ENCODE measurements at regions of chr1 and their contacts with region 1.

Region 1: GRCh38 chr1:39132505-39133339 is 71.8 kb upstream of the MACF1 start:
- DNase-seq: peak; percentile 88
- ATAC-seq: peak; percentile 92
- H3K4me3 Mint-ChIP-seq: peak overlapping the region; percentile 34
- H3K27ac Mint-ChIP-seq: peak overlapping the region; percentile 98
- H3K4me1 Mint-ChIP-seq: peaks cover 67% of the 10 kb centered on the region
- H3K27me3 Mint-ChIP-seq: no peaks in the 10 kb centered on the region
- CTCF ChIP-seq: no peak

Region 2: GRCh38 chr1:38327559-38327973 is 805.2 kb before region 1 on chr1:
- CTCF ChIA-PET with region 1: no interaction called
- POLR2A ChIA-PET with region 1: no interaction called
- DNase-seq: no peak
- ATAC-seq: no peak
- H3K4me3 Mint-ChIP-seq: no peak overlapping the region
- H3K27ac Mint-ChIP-seq: no peak overlapping the region
- H3K4me1 Mint-ChIP-seq: peaks cover 8% of the 10 kb centered on the region
- H3K27me3 Mint-ChIP-seq: no peaks in the 10 kb centered on the region
- CTCF ChIP-seq: no peak

Region 3: DNA sequence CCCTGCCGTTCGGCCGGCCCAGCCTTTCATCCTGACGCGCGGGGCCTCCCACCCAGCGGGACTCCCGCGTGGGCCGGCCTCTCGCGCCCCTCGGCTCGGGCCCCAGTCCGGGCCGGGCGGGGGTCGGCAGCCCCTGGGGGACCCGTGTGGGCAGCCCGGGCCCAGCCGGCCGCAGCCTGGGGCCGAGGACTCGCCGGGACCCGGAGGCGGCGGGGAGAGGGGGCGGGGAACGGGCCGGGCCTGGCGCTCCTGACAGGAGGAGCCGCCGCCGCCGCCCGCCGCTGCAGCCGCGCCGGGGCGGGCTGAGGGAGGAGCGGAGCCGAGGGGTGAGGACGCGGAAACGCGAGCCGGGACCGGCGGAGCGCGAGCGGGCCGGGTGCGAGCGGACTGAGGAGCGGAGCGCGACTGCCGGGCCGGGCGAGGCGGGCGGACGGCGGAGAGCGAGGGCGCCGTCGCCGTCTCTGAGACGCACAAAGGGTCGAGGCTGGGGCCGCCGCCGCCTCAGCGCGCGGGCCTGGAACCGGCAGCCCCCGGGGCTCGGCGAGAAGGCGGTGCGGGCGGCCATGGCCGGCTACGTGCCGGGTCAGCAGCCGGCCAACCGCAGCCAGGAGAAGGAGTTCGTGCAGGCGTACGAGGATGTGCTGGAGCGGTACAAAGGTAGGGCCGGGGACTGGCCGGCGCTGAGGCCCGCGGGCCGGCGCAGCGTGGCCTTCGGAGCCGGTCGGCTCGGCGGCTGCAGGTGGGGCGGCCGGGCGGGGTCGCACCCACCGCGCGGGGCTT is 27.5 kb before region 1 on chr1:
- CTCF ChIA-PET with region 1: interaction called, 39 read pairs
- POLR2A ChIA-PET with region 1: interaction called, 9 read pairs
- DNase-seq: peak; percentile 70
- ATAC-seq: peak; percentile 19
- H3K4me3 Mint-ChIP-seq: peak overlapping the region; percentile 71
- H3K27ac Mint-ChIP-seq: no peak overlapping the region
- H3K4me1 Mint-ChIP-seq: peaks cover 40% of the 10 kb centered on the region
- H3K27me3 Mint-ChIP-seq: no peaks in the 10 kb centered on the region
- CTCF ChIP-seq: no peak

Region 4: GRCh38 chr1:39158327-39159086 is 25.8 kb after region 1 on chr1:
- CTCF ChIA-PET with region 1: interaction called, 39 read pairs
- POLR2A ChIA-PET with region 1: interaction called, 4 read pairs
- DNase-seq: peak; percentile 45
- ATAC-seq: peak; percentile 56
- H3K4me3 Mint-ChIP-seq: peak overlapping the region; percentile 69
- H3K27ac Mint-ChIP-seq: peak overlapping the region; percentile 98
- H3K4me1 Mint-ChIP-seq: peaks cover 73% of the 10 kb centered on the region
- H3K27me3 Mint-ChIP-seq: no peaks in the 10 kb centered on the region
- CTCF ChIP-seq: no peak

Region 5: DNA sequence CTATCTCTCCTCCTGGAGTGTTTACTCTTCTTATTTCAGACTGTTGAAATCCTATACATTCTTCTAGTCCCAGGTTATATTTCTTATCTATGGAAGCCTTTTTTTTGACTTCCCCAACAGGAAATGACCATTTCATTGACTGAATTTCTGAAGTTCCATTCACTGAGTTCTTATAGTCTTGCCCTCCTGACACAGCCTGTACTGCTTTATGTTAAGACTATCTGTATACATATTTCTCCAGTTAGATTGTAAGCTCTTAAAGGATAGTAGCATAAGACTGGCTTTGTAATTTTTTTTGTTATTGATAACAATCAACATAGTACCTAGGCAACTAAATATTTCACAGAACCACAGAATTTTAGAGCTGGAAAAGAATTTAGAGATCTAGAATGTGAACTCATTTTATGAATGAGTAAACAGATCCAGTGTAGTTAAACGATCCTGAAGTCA is 56.9 kb after region 1 on chr1:
- CTCF ChIA-PET with region 1: interaction called, 130 read pairs
- POLR2A ChIA-PET with region 1: no interaction called
- DNase-seq: no peak
- ATAC-seq: no peak
- H3K4me3 Mint-ChIP-seq: no peak overlapping the region
- H3K27ac Mint-ChIP-seq: peak overlapping the region; percentile 24
- H3K4me1 Mint-ChIP-seq: peaks cover 71% of the 10 kb centered on the region
- H3K27me3 Mint-ChIP-seq: no peaks in the 10 kb centered on the region
- CTCF ChIP-seq: no peak

Region 6: GRCh38 chr1:39214998-39215873 is 82.5 kb after region 1 on chr1:
- CTCF ChIA-PET with region 1: interaction called, 10 read pairs
- POLR2A ChIA-PET with region 1: no interaction called
- DNase-seq: no peak
- ATAC-seq: peak; percentile 59
- H3K4me3 Mint-ChIP-seq: no peak overlapping the region
- H3K27ac Mint-ChIP-seq: peak overlapping the region; percentile 68
- H3K4me1 Mint-ChIP-seq: peaks cover 46% of the 10 kb centered on the region
- H3K27me3 Mint-ChIP-seq: no peaks in the 10 kb centered on the region
- CTCF ChIP-seq: no peak

Region 7: GRCh38 chr1:39398278-39399021 is 265.7 kb after region 1 on chr1:
- CTCF ChIA-PET with region 1: no interaction called
- POLR2A ChIA-PET with region 1: no interaction called
- DNase-seq: no peak
- ATAC-seq: peak; percentile 79
- H3K4me3 Mint-ChIP-seq: no peak overlapping the region
- H3K27ac Mint-ChIP-seq: peak overlapping the region; percentile 37; the same call in 1 of the 2 replicates
- H3K4me1 Mint-ChIP-seq: peaks cover 47% of the 10 kb centered on the region
- H3K27me3 Mint-ChIP-seq: no peaks in the 10 kb centered on the region
- CTCF ChIP-seq: no peak

Measured in WTC11 (cell line).